Calu3 (cell line): ENCODE measurements at regions of chr14 and their contacts with region 1.

Region 1: DNA sequence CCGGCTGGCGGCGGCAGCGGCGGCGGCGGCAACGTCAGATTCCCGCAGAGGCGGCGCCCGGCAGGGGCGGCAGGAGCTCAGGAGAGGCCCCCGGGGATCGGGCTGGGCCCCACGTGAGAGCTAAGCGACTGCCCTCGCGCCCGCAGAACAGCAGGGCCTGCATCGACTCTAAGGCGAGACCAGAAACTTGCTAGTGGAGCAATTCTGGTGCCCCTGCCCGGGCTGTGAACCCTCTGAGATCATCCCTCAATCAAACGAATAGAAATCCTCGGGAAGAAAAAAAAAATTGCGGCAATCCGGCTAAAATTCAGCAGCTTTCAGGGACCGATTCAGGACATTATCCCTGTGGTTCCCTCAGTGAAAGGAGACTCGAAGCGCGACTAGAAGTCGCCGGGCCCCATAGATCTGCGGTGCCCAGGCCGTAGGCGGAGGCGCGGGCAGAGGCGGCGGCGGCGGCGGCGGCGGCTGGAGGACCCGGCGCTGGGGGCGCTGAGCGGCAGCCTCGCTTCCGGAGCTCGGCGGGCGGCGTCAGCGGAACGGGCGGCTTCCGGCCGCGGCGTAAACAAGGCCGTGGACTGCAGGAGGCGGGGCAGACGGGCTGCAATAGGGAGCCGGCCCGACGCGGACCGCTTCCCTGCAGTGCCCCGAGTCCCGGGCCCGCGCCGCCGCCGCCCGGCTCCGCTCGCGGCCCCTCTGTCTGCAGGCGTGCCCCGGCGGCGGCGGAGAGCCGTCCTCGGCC is at the start of gene KLHDC2:
- DNase-seq: peak; percentile 91
- H3K4me3 Mint-ChIP-seq: peak within 1 kb of the TSS; percentile 85
- H3K27ac Mint-ChIP-seq: peak within 1 kb of the TSS; percentile 78
- H3K4me1 Mint-ChIP-seq: peaks cover 28% of the 10 kb centered on the region
- H3K27me3 Mint-ChIP-seq: no peaks in the 10 kb centered on the region
- CTCF ChIP-seq: no peak
- total RNA-seq, gene KLHDC2: 26.8 and 30.7 TPM in 2 replicates

Region 2: DNA sequence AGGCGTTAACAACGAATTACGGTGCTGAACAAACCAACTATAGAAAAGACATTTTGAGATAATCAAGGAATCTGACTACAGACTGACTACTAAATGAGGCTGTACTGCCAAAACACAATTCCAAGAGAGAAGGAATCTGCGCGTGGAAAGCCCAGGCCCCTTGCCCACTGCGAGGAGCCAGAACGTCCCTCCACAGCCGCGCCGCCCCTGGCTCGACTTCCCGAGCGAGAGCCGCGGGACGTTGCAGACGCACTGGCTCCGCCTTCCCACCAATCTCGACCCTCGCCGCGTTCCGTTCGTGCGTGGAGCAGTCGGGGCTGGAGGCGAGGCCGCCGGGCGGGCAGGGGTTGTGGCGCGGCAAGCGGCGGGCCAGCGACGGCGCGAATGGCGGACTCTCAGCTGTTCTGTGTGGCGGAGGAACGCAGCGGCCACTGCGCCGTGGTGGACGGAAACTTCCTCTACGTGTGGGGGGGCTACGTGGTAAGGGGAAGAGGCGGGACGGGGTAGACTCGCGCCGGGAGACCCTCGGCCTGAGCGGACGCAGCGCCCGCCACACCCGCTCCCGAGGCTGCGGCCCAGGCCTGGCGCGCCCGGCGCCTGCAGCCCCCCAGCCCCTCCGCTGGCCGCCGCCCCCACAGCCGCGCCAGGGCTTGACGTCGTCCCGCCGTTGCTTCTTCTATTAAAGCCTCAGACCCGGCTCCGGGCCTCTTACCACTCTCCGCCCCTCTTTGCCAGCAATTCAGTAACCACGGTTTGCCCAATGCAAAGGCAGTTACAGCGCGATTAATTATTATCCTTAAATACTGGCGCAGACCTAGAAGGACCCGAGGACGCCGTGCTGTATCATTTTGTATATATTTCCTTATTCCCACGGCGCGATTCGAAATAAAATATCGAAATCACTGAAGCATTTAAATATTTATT is 74.7 kb before region 1 on chr14 and contains the start of gene KLHDC1:
- CTCF ChIA-PET with region 1: interaction called, 6 read pairs
- intact Hi-C with region 1: loop called (anchors 5 kb)
- DNase-seq: peak; percentile 60
- H3K4me3 Mint-ChIP-seq: peak within 1 kb of the TSS; percentile 61
- H3K27ac Mint-ChIP-seq: peak within 1 kb of the TSS; percentile 28
- H3K4me1 Mint-ChIP-seq: peaks cover 27% of the 10 kb centered on the region
- H3K27me3 Mint-ChIP-seq: no peaks in the 10 kb centered on the region
- CTCF ChIP-seq: no peak
- total RNA-seq, gene KLHDC1: 0.49 and 0.99 TPM in 2 replicates

Region 3: DNA sequence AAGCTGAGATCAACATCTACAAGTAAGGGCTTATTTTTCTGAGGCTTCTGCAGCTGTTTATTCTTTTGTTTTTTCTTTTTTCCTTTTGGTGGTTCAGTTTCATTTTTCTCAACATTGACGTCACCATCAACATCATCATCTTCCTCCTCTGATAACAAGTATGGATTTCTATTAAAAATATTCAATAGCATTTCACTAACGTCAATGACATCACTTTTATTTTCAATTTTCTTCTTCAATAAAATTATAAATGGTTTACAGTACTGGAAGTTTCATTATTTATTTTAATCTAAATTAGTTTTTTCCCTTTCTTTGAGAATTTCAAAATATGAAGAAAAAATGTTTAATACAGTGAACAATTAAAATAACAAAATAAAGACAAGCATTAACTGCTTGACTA is 60.9 kb after region 1 on chr14:
- CTCF ChIA-PET with region 1: no interaction called
- intact Hi-C with region 1: no loop called
- DNase-seq: no peak
- H3K4me3 Mint-ChIP-seq: no peak overlapping the region
- H3K27ac Mint-ChIP-seq: no peak overlapping the region
- H3K4me1 Mint-ChIP-seq: no peaks in the 10 kb centered on the region
- H3K27me3 Mint-ChIP-seq: no peaks in the 10 kb centered on the region
- CTCF ChIP-seq: no peak

Region 4: DNA sequence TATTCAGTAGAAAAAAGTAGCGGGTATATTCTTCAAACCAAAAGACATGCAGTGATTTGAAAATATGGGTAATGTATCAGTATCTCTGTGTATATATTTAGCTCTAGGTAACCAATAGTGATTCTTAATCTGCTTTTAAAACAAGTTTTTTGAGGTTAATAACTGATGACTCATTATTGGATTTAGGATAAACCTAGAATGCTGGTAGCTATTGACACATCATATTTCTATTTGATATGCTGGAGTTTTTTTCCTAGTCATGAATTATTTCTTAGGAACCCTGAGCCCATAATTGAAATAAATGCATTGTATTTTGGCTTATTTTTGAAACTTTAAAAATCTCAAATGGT is 140.7 kb after region 1 on chr14:
- CTCF ChIA-PET with region 1: no interaction called
- intact Hi-C with region 1: no loop called
- DNase-seq: no peak
- H3K4me3 Mint-ChIP-seq: no peak overlapping the region
- H3K27ac Mint-ChIP-seq: peak overlapping the region; percentile 88
- H3K4me1 Mint-ChIP-seq: peaks cover 41% of the 10 kb centered on the region
- H3K27me3 Mint-ChIP-seq: no peaks in the 10 kb centered on the region
- CTCF ChIP-seq: no peak